Activated naive CD4-positive, alpha-beta T cell treated with anti-CD3 and anti-CD28 coated beads for 36 hours (primary cell): ENCODE measurements at regions of chr16 and their contacts with region 1.

Region 1: GRCh38 chr16:71461686-71462648 is at the start of gene ZNF23:
- DNase-seq: peak; percentile 78
- H3K4me3 Mint-ChIP-seq: peak within 1 kb of the TSS; percentile 89
- H3K27ac Mint-ChIP-seq: peak within 1 kb of the TSS; percentile 91
- H3K4me1 Mint-ChIP-seq: peaks cover 18% of the 10 kb centered on the region
- H3K27me3 Mint-ChIP-seq: no peaks in the 10 kb centered on the region
- total RNA-seq, gene ZNF23: 6.9 to 7.1 TPM

Region 2: DNA sequence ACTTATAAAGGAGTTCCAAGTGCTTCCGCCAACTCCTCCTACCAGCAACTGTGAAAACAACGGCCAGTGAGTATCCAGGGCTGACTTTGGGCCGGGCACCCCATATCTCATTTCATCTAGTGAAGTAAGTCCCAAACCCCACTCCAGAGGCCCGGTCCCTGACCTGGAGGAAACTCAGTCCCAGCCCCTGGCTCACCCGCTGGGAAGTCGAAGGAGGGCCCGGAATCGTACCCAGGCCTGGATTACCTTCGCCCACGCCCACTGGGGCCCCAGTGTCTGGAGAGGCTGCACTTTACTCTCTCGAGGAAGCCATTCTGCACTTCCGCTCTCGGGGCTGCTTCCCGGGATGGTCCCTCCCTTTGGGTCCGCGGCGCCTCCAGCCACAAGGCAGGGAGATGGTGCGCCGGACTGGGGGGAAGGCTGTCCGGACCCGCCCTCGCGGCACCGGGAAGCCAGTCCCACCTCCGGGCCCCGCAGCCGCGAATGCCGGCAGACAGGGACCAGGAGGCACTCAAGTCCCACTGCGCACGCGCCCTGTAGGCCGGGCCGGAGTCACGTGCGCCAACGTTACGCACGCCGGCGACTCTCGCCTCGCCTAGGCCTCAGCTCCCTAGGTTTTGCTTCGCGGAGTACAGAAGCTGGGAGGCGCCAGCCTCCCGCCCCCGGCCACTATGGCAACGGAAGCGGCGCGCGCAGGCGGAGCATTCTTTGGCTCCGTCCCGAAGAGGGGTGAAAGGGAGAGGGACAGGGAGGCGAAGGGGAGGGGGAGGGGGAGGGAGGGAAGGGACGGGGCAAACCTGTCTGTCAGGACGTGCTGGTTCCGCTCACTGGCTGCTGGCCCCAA is 172.9 kb before region 1 on chr16 and contains the start of gene CMTR2:
- CTCF ChIA-PET with region 1: no interaction called
- intact Hi-C with region 1: loop called (anchors 1 kb)
- DNase-seq: peak; percentile 93
- H3K4me3 Mint-ChIP-seq: peak within 1 kb of the TSS; percentile 84
- H3K27ac Mint-ChIP-seq: peak within 1 kb of the TSS; percentile 86
- H3K4me1 Mint-ChIP-seq: peaks cover 9% of the 10 kb centered on the region
- H3K27me3 Mint-ChIP-seq: peaks cover 7% of the 10 kb centered on the region
- total RNA-seq, gene CMTR2: 14.4 to 15.1 TPM

Region 3: DNA sequence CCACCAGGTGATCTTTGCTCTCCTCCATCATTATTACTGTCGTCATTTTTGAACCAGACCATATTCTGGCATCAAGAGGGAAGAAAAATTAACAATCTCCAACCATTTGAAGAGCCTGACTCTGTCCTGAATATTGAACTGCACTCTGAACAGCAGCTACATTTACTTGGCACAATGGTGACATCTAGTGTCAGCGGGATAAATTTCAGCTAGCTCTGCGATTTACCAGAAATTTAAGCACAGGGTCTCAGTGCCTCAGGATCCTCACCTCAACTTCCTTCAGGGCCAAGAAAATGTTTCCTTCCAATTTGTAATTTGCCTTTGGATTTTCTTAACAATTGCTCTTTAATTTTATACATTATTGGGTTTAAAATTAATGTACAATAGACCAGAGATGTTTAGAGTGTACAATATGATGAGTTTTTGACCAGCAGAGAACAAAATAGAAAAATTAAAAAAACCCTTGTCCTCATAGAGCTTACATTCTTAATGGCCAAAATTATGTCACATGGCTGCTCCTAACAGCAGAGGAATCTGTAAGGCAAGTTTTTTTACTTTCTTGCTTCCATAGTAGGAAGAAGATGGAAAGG is 37.9 kb after region 1 on chr16:
- CTCF ChIA-PET with region 1: interaction called, 20 read pairs
- intact Hi-C with region 1: loop called (anchors 5 kb)
- DNase-seq: peak; percentile 71
- H3K4me3 Mint-ChIP-seq: no peak overlapping the region
- H3K27ac Mint-ChIP-seq: no peak overlapping the region
- H3K4me1 Mint-ChIP-seq: no peaks in the 10 kb centered on the region
- H3K27me3 Mint-ChIP-seq: no peaks in the 10 kb centered on the region

Region 4: GRCh38 chr16:71537643-71538042 is 75.7 kb after region 1 on chr16:
- CTCF ChIA-PET with region 1: interaction called, 3 read pairs
- intact Hi-C with region 1: loop called (anchors 1 kb)
- DNase-seq: peak; percentile 65
- H3K4me3 Mint-ChIP-seq: no peak overlapping the region
- H3K27ac Mint-ChIP-seq: no peak overlapping the region
- H3K4me1 Mint-ChIP-seq: no peaks in the 10 kb centered on the region
- H3K27me3 Mint-ChIP-seq: no peaks in the 10 kb centered on the region

Region 5: GRCh38 chr16:71723537-71724319 is 261.8 kb after region 1 on chr16:
- CTCF ChIA-PET with region 1: no interaction called
- intact Hi-C with region 1: loop called (anchors 5 kb)
- DNase-seq: peak; percentile 74
- H3K4me3 Mint-ChIP-seq: peak overlapping the region; percentile 80
- H3K27ac Mint-ChIP-seq: no peak overlapping the region
- H3K4me1 Mint-ChIP-seq: peaks cover 18% of the 10 kb centered on the region
- H3K27me3 Mint-ChIP-seq: peaks cover 6% of the 10 kb centered on the region